Activated CD8-positive, alpha-beta T cell treated with anti-CD3 and anti-CD28 coated beads, Interleukin-2, amount 10 ng/mL, durations not matched to agents 7 days and 5 days (primary cell): ENCODE measurements at regions of chr1 and their contacts with region 1.

Region 1: GRCh38 chr1:231866392-231867331 is 240.1 kb downstream of the DISC1 start:
- DNase-seq: peak; percentile 71
- ATAC-seq: no peak
- H3K4me3 Mint-ChIP-seq: no peak overlapping the region
- H3K27ac Mint-ChIP-seq: no peak overlapping the region
- H3K4me1 Mint-ChIP-seq: peaks cover 19% of the 10 kb centered on the region
- H3K27me3 Mint-ChIP-seq: no peaks in the 10 kb centered on the region

Region 2: GRCh38 chr1:231828182-231828920 is 38.3 kb before region 1 on chr1:
- CTCF ChIA-PET with region 1: no interaction called
- POLR2A ChIA-PET with region 1: no interaction called
- DNase-seq: no peak
- ATAC-seq: no peak
- H3K4me3 Mint-ChIP-seq: no peak overlapping the region
- H3K27ac Mint-ChIP-seq: no peak overlapping the region
- H3K4me1 Mint-ChIP-seq: no peaks in the 10 kb centered on the region
- H3K27me3 Mint-ChIP-seq: no peaks in the 10 kb centered on the region

Region 3: DNA sequence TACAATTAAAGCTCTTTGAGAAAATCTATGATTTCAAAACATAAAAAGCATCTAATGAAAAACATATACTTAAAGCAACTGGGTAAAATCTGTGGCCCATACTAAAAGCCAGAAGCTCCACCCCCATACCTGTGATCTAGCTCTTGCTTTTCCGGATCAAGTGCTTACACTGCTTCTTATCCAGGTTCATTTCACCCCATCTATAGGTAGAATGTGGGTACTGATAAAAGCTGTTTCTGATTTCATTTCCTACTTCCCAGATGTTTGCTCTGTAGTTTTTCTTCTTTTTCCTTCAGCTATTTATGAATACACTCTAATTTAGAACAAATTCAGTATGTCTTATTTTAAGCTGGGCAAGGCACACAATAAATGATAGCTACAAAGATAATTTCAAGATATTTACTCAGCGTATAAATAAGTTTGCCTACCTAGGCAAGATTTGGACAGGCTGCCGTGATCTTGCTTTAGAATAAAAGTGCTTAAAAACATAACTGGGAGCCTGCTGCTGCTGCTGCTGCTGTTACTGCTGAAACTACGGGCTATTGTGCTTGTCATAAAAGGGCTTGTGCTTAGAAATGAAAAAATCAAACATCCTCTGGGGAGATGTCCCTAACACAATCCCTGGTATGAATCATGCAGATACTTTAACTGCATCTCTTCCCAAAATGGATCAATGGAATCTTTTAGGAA is 761.1 kb after region 1 on chr1:
- CTCF ChIA-PET with region 1: interaction called, 11 read pairs
- POLR2A ChIA-PET with region 1: no interaction called
- DNase-seq: peak; percentile 30
- ATAC-seq: no peak
- H3K4me3 Mint-ChIP-seq: no peak overlapping the region
- H3K27ac Mint-ChIP-seq: no peak overlapping the region
- H3K4me1 Mint-ChIP-seq: peaks cover 14% of the 10 kb centered on the region
- H3K27me3 Mint-ChIP-seq: peaks cover 45% of the 10 kb centered on the region